ENCODE measurements at regions of chr17 and their contacts with region 1.

Region 1: GRCh38 chr17:75182569-75183450 is at the start of gene SUMO2:
- DNase-seq: peak; percentile 92 to 95 (median 94)
- H3K4me3 ChIP-seq: peak within 1 kb of the TSS; percentile 52 to 93
- H3K4me3 Mint-ChIP-seq: peak within 1 kb of the TSS; percentile 89 to 97 (median 92)
- H3K27ac ChIP-seq: peak within 1 kb of the TSS; percentile 94
- H3K27ac Mint-ChIP-seq: peak within 1 kb of the TSS; percentile 87 to 98 (median 97)
- H3K4me1 ChIP-seq: peaks cover 44% of the 10 kb centered on the region
- H3K4me1 Mint-ChIP-seq: peaks cover 20 to 47% (median 35%) of the 10 kb centered on the region in 4 donors
- H3K27me3 ChIP-seq: no peaks in the 10 kb centered on the region
- H3K27me3 Mint-ChIP-seq: no peaks in the 10 kb centered on the region
- total RNA-seq, gene SUMO2: 255 to 264 TPM

Region 2: GRCh38 chr17:74994476-74994875 is 188.3 kb before region 1 on chr17:
- CTCF ChIA-PET with region 1: no interaction called
- POLR2A ChIA-PET with region 1: no interaction called
- intact Hi-C with region 1: no loop called
- DNase-seq: no peak
- H3K4me3 ChIP-seq: no peak overlapping the region
- H3K4me3 Mint-ChIP-seq: no peak overlapping the region
- H3K27ac ChIP-seq: no peak overlapping the region
- H3K27ac Mint-ChIP-seq: no peak overlapping the region
- H3K4me1 ChIP-seq: no peaks in the 10 kb centered on the region
- H3K4me1 Mint-ChIP-seq: peaks cover 0 to 8% (median 6%) of the 10 kb centered on the region in 4 donors
- H3K27me3 ChIP-seq: no peaks in the 10 kb centered on the region
- H3K27me3 Mint-ChIP-seq: no peaks in the 10 kb centered on the region

Region 3: GRCh38 chr17:75034236-75034908 is 148.4 kb before region 1 on chr17:
- CTCF ChIA-PET with region 1: no interaction called
- POLR2A ChIA-PET with region 1: interaction called, 8 read pairs
- intact Hi-C with region 1: loop called (anchors 5 kb)
- DNase-seq: peak; percentile 73 to 83 (median 75)
- H3K4me3 ChIP-seq: peak overlapping the region; percentile 64 to 70
- H3K4me3 Mint-ChIP-seq: peak overlapping the region; percentile 79 to 91 (median 88)
- H3K27ac ChIP-seq: peak overlapping the region; percentile 55
- H3K27ac Mint-ChIP-seq: peak overlapping the region; percentile 99 to 100 (median 100)
- H3K4me1 ChIP-seq: peaks cover 57% of the 10 kb centered on the region
- H3K4me1 Mint-ChIP-seq: peaks cover 31 to 69% (median 54%) of the 10 kb centered on the region in 4 donors
- H3K27me3 ChIP-seq: no peaks in the 10 kb centered on the region
- H3K27me3 Mint-ChIP-seq: peaks cover 0 to 14% of the 10 kb centered on the region in 2 donors

Region 4: DNA sequence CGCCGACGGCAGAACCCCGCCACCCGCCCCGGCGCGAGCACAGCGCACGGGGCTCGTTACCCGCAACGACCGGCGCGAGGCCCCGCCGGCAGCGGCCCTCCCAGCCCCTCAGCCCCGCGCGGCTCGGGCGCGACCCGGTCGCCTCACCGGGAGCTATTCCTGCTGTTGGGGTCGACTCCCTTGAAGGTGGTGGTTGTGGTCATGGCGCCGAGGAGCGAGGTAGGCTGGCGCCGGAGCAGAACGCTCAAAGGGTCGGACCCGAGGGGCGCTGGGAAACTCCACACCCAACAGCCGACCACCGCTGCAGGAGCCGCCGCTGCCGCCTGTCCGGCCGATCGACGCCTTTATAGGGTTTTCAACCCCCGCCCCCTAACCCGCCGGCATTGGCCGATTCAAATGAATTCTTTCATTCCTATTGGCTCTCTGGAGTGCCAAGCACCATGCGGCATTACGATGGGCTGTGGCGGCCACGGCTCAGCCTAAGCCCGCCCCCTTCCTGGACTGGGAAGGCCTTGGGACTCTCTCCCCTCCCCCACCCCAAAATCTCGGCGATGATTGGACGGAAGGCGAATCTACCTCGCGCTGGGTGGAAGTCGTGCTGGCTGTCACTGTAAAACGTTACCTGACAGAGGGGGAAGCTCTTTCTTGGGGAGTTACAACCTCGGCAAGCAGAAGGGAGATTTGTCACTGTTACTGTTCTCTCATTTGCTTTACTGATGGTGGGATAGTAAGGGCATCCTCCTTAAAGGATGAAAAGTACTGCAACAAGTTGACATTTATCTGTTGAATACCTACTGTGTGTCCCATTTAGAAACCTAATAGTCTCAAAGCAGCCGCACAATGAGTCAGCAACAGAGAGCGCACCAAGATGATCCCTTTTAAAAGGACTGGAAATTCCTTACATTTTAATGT is 28.4 kb before region 1 on chr17 and contains the start of gene JPT1:
- CTCF ChIA-PET with region 1: no interaction called
- POLR2A ChIA-PET with region 1: interaction called, 13 read pairs
- intact Hi-C with region 1: loop called (anchors 1 kb)
- DNase-seq: peak; percentile 95 to 98 (median 97)
- H3K4me3 ChIP-seq: peak within 1 kb of the TSS; percentile 40 to 85
- H3K4me3 Mint-ChIP-seq: peak within 1 kb of the TSS; percentile 93 to 96 (median 94)
- H3K27ac ChIP-seq: peak within 1 kb of the TSS; percentile 63
- H3K27ac Mint-ChIP-seq: peak within 1 kb of the TSS; percentile 82 to 98 (median 94)
- H3K4me1 ChIP-seq: peaks cover 24% of the 10 kb centered on the region
- H3K4me1 Mint-ChIP-seq: peaks cover 24 to 32% (median 30%) of the 10 kb centered on the region in 4 donors
- H3K27me3 ChIP-seq: no peaks in the 10 kb centered on the region
- H3K27me3 Mint-ChIP-seq: no peaks in the 10 kb centered on the region
- total RNA-seq, gene JPT1: 37.8 to 38.9 TPM

Region 5: GRCh38 chr17:75205037-75205792 is 22.4 kb after region 1 on chr17 and contains the start of gene NUP85:
- CTCF ChIA-PET with region 1: interaction called, 63 read pairs
- POLR2A ChIA-PET with region 1: interaction called, 9 read pairs
- intact Hi-C with region 1: loop called (anchors 1 kb)
- DNase-seq: peak; percentile 88 to 95 (median 93)
- H3K4me3 ChIP-seq: peak within 1 kb of the TSS; percentile 55 to 86
- H3K4me3 Mint-ChIP-seq: peak within 1 kb of the TSS; percentile 93 to 99 (median 96)
- H3K27ac ChIP-seq: peak within 1 kb of the TSS; percentile 80
- H3K27ac Mint-ChIP-seq: peak within 1 kb of the TSS; percentile 99 to 100 (median 99)
- H3K4me1 ChIP-seq: peaks cover 26% of the 10 kb centered on the region
- H3K4me1 Mint-ChIP-seq: peaks cover 15 to 48% (median 24%) of the 10 kb centered on the region in 4 donors
- H3K27me3 ChIP-seq: no peaks in the 10 kb centered on the region
- H3K27me3 Mint-ChIP-seq: no peaks in the 10 kb centered on the region
- total RNA-seq, gene NUP85: 137 to 164 TPM

Region 6: DNA sequence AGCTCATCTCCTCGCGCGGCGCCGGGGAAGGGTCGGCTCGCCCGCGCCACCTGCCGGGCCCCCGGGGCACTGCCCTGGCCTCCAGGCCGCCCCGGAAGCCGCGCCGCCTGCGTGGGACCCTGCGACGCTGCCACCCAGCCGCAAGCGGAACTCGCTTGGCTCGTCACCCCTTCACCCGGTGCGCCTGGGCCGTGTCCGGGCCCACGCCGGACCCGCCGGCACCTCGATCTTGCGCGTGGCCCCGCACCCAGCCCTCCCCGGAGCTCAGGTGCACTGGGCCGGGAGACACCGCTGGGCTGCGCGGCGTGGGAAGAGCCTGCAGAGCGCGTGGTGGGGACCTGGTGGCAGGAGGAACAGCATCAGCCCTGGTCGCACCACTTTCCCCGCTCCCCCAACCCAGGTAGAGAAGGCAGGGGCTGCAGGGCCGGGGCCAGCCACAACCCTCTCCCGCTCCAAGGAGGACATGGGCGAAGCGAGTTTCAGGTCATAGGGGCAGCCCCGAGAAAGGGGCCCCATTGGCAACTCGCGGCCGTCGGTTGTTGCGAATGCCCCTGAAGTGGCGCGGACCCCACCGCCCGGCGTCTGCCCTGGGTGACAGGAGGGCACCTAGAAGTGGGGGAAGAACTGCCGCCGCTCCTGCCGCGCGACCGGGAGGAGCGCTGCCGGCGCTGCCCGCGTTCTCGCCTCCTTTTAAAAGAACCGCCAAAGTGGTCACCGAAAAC is 88.6 kb after region 1 on chr17:
- CTCF ChIA-PET with region 1: interaction called, 3 read pairs
- POLR2A ChIA-PET with region 1: interaction called, 18 read pairs
- intact Hi-C with region 1: loop called (anchors 2 kb)
- DNase-seq: peak; percentile 86 to 94 (median 88)
- H3K4me3 ChIP-seq: peak overlapping the region; percentile 42 to 82
- H3K4me3 Mint-ChIP-seq: peak overlapping the region; percentile 80 to 91 (median 84)
- H3K27ac ChIP-seq: peak overlapping the region; percentile 89
- H3K27ac Mint-ChIP-seq: peak overlapping the region; percentile 25 to 94 (median 88)
- H3K4me1 ChIP-seq: peaks cover 27% of the 10 kb centered on the region
- H3K4me1 Mint-ChIP-seq: peaks cover 10 to 35% (median 22%) of the 10 kb centered on the region in 4 donors
- H3K27me3 ChIP-seq: no peaks in the 10 kb centered on the region
- H3K27me3 Mint-ChIP-seq: no peaks in the 10 kb centered on the region

Region 7: GRCh38 chr17:75515496-75516254 is 332.9 kb after region 1 on chr17 and contains the start of gene CASKIN2:
- CTCF ChIA-PET with region 1: no interaction called
- POLR2A ChIA-PET with region 1: no interaction called
- intact Hi-C with region 1: loop called (anchors 5 kb)
- DNase-seq: peak; percentile 68 to 74 (median 70)
- H3K4me3 ChIP-seq: peak within 1 kb of the TSS; percentile 69 to 74
- H3K4me3 Mint-ChIP-seq: peak within 1 kb of the TSS; percentile 70 to 84 (median 80)
- H3K27ac ChIP-seq: no peak within 1 kb of the TSS
- H3K27ac Mint-ChIP-seq: peak within 1 kb of the TSS in 6 of 7 donors; percentile 19 to 75 (median 52)
- H3K4me1 ChIP-seq: peaks cover 29% of the 10 kb centered on the region
- H3K4me1 Mint-ChIP-seq: peaks cover 16 to 31% (median 19%) of the 10 kb centered on the region in 4 donors
- H3K27me3 ChIP-seq: no peaks in the 10 kb centered on the region
- H3K27me3 Mint-ChIP-seq: no peaks in the 10 kb centered on the region
- total RNA-seq, gene CASKIN2: 0.32 to 0.53 TPM